Transverse colon (tissue), 4 donors: ENCODE measurements at regions of chr6 and their contacts with region 1.

Region 1: GRCh38 chr6:165850434-165851019 is 187.5 kb upstream of the PDE10A start:
- DNase-seq: peak; percentile 76
- H3K4me3 ChIP-seq: no peak overlapping the region
- H3K27ac ChIP-seq: no peak overlapping the region
- H3K4me1 ChIP-seq: peaks cover 3 to 25% (median 17%) of the 10 kb centered on the region in 4 donors
- H3K27me3 ChIP-seq: peaks cover 33% of the 10 kb centered on the region
- CTCF ChIP-seq: peak; percentile 90 to 99 (median 97)
- EP300 ChIP-seq: no peak
- POLR2A ChIP-seq: no peak

Region 2: DNA sequence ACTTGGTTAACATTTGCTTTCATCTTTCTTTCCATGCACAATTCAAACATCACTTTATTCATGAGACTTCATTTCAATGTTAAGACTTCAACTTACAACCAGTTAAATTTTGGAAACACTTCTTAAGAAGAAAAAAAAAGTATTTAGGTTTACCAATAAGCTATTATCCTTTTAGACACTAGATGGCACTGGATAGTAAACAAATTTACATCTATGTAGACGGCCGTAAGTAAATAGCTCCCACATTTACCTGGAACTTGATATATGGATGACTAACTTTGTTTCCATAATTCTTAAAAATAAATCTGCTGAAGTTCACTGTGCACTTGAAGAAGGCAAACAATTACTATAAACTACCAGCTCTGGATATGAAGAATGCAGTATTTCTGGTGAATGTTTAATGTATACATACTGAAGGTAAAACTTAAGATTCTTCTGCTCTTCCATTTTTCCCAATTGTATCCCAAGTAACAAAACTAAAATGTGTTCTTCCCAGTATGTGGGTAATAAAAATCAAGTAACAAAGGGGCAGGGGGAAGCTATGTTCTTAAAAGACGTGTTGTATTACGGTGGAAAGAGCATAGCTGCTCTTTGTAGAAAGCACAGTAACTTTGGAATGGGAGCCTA is 410.5 kb before region 1 on chr6:
- in situ Hi-C with region 1: loop called in 1 of 4 experiments (anchors 25 kb)
- intact Hi-C with region 1: no loop called
- DNase-seq: no peak
- H3K4me3 ChIP-seq: no peak overlapping the region
- H3K27ac ChIP-seq: no peak overlapping the region
- H3K4me1 ChIP-seq: no peaks in the 10 kb centered on the region
- H3K27me3 ChIP-seq: no peaks in the 10 kb centered on the region
- CTCF ChIP-seq: peak in 3 of 5 experiments; percentile 14 to 36 (median 36)
- EP300 ChIP-seq: no peak
- POLR2A ChIP-seq: no peak

Region 3: DNA sequence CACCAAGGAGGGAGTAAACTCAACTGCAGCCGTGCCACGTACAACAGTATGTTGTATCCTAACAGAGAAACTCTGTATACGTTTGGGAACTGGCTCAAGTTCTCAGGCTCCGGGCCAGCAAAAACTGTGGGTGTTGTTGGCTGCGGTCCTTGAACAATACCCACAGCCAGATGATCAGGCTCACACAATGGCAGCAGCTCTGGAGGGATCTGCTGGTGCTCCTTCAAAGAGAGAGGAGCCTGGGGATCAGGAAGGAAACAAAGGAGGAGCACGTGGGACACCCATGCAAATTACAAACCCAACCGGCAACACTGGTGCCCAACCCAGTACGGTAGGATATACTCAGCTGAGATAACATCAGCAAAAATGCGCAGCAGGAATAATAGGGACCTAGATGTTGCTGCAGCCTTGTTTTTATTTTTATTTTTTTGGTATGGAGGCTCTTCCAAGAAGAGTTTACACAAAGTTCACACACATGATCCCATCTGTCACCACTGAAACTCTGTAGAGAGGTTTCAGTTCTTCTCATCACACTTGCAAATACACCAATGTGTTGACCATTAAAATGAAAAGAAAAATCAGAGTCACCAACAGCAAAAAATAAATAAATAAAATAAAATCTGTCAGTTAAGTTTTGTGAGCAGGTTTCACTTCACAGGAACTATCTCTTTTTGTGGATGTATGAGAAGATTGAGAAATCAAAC is 146.3 kb before region 1 on chr6:
- in situ Hi-C with region 1: no loop called
- intact Hi-C with region 1: no loop called
- DNase-seq: no peak
- H3K4me3 ChIP-seq: no peak overlapping the region
- H3K27ac ChIP-seq: no peak overlapping the region
- H3K4me1 ChIP-seq: no peaks in the 10 kb centered on the region
- H3K27me3 ChIP-seq: no peaks in the 10 kb centered on the region
- CTCF ChIP-seq: no peak
- EP300 ChIP-seq: no peak
- POLR2A ChIP-seq: no peak

Region 4: DNA sequence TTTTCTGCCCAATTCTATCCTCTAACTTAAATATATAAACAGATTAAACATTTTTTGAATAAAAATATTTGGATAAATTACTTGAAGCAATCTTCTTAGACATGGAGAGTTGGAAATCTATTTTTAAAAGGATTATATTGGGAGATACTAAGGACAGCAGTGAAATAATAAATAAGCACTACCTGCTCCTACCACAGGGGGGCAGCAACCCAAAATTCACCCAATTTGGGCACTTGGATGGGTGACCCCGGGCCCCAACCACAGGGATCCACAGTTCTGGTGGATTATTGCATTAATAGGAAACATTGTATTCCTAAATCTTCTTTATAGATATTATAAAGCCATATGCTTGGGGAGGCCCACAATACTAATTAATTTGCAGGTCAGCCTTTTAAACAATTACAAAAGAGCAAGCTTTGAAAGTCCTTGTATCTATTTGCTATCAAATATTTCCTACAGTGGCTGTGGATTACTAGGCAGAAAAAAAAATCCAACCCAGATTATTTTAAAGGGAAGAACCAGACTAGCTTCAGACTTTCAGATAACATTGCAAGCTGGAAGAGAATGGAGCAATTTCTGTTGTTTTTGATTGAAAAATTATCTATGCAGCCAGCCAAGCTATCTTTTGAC is 121.1 kb before region 1 on chr6:
- in situ Hi-C with region 1: loop called in 2 of 4 experiments (anchors 5 kb)
- intact Hi-C with region 1: loop called (anchors 5 kb)
- DNase-seq: peak; percentile 39
- H3K4me3 ChIP-seq: no peak overlapping the region
- H3K27ac ChIP-seq: no peak overlapping the region
- H3K4me1 ChIP-seq: no peaks in the 10 kb centered on the region
- H3K27me3 ChIP-seq: no peaks in the 10 kb centered on the region
- CTCF ChIP-seq: peak; percentile 77 to 88 (median 80)
- EP300 ChIP-seq: no peak
- POLR2A ChIP-seq: no peak

Region 5: DNA sequence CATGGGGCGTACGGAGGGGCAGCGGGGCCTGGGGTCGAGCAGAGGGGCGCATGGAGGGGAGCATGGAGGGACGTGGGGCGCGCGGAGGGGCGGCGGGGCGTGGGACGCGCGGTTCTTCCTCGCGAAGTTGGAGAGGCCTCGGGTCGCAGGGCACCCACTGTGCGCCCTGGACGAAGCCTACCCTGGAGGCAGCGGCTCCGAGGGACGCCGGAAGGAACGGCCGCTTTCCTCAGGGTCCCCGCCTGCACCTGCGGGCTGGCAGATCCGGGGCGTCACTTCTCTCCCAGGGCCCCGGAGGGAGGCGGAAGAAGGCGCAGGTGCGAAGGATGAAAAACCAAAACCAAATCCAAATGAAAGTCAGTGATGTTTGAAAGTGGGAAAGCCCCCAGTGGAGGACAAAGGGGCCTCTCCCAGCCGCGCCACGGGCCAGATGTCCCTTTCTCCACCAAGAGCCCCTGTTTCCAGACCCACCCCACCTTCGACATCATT is 45.4 kb before region 1 on chr6:
- in situ Hi-C with region 1: no loop called
- intact Hi-C with region 1: loop called (anchors 1 kb)
- DNase-seq: no peak
- H3K4me3 ChIP-seq: peak overlapping the region in 1 of 4 donors; percentile 34
- H3K27ac ChIP-seq: no peak overlapping the region
- H3K4me1 ChIP-seq: peaks cover 0 to 3% (median 0%) of the 10 kb centered on the region in 4 donors
- H3K27me3 ChIP-seq: peaks cover 34% of the 10 kb centered on the region
- CTCF ChIP-seq: no peak
- EP300 ChIP-seq: no peak
- POLR2A ChIP-seq: no peak

Region 6: GRCh38 chr6:167711768-167712730 is 1861.5 kb after region 1 on chr6:
- in situ Hi-C with region 1: no loop called
- intact Hi-C with region 1: no loop called
- DNase-seq: peak; percentile 68
- H3K4me3 ChIP-seq: peak overlapping the region in 2 of 4 donors; percentile 11 to 14
- H3K27ac ChIP-seq: peak overlapping the region; percentile 57 to 80 (median 74)
- H3K4me1 ChIP-seq: peaks cover 0 to 17% (median 10%) of the 10 kb centered on the region in 4 donors
- H3K27me3 ChIP-seq: peaks cover 3% of the 10 kb centered on the region
- CTCF ChIP-seq: no peak
- EP300 ChIP-seq: no peak
- POLR2A ChIP-seq: peak; percentile 72